CD8-positive, alpha-beta T cell (primary cell): ENCODE measurements at regions of chrX and their contacts with region 1.

Region 1: DNA sequence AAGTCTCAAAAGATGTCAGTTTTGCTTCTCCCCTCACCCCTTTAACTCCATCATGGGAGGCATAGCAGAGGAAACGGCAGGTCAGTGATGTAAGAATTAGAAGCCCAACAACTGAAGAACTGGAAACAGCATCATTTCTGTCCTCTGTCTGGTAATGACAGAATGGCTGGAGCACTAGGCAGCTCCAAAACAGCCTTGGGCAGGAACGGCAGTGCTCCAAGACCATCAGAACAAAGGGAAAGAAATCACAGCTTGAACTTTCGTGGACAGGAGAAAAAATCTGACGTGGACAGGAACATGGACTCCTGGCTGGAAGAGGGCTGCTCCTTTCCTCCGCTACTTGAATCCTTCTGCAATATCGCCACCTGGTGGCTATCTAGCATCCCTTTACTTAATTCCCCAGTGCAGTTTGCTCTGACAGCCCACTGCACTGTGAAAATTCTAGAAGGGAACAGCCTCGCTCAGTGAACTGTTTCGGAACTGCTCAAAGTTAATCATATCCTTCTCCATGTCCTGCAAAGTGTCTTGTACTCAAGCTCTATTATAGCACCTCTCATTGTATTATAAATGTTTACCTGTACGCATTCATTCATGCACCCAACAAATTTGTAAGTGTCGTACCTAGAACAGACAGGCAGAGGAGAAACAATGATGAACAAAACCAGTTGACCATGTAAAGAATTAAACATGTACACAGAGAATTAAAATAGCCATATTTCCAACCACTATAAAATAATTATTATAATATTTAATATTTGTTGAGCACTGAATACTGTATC is 20.4 kb downstream of the SLC25A53 start:
- DNase-seq: peak in 8 of 9 experiments; percentile 32 to 82 (median 62)
- ATAC-seq: peak; percentile 70
- H3K4me3 ChIP-seq: no peak overlapping the region
- H3K4me3 Mint-ChIP-seq: peak overlapping the region; percentile 22
- H3K27ac ChIP-seq: no peak overlapping the region
- H3K27ac Mint-ChIP-seq: no peak overlapping the region
- H3K4me1 ChIP-seq: peaks cover 13% of the 10 kb centered on the region
- H3K4me1 Mint-ChIP-seq: peaks cover 28% of the 10 kb centered on the region
- H3K27me3 ChIP-seq: no peaks in the 10 kb centered on the region
- H3K27me3 Mint-ChIP-seq: no peaks in the 10 kb centered on the region
- CTCF ChIP-seq: peak; percentile 61

Region 2: DNA sequence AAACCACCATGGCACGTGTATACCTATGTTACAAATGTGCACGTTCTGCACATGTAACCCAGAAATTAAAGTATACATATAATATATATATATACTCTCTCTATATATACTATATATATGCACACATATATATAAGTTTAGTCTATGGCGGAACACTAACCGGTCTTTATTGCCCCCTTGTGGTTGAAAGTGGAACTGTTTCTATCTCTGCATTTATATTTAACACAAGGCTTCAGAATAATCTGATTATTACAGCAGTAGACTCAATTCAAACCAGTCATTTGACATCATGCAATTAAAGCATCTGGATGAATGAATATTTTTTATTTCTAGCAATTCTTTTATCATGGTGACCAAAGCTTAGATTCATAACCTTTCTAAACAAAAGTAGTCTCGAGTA is 318.9 kb before region 1 on chrX:
- CTCF ChIA-PET with region 1: no interaction called
- POLR2A ChIA-PET with region 1: no interaction called
- intact Hi-C with region 1: no loop called
- DNase-seq: peak in 3 of 9 experiments; percentile 40 to 66 (median 60)
- ATAC-seq: peak; percentile 64
- H3K4me3 ChIP-seq: no peak overlapping the region
- H3K4me3 Mint-ChIP-seq: no peak overlapping the region
- H3K27ac ChIP-seq: no peak overlapping the region
- H3K27ac Mint-ChIP-seq: no peak overlapping the region
- H3K4me1 ChIP-seq: no peaks in the 10 kb centered on the region
- H3K4me1 Mint-ChIP-seq: no peaks in the 10 kb centered on the region
- H3K27me3 ChIP-seq: no peaks in the 10 kb centered on the region
- H3K27me3 Mint-ChIP-seq: peaks cover 8% of the 10 kb centered on the region
- CTCF ChIP-seq: peak; percentile 58

Region 3: DNA sequence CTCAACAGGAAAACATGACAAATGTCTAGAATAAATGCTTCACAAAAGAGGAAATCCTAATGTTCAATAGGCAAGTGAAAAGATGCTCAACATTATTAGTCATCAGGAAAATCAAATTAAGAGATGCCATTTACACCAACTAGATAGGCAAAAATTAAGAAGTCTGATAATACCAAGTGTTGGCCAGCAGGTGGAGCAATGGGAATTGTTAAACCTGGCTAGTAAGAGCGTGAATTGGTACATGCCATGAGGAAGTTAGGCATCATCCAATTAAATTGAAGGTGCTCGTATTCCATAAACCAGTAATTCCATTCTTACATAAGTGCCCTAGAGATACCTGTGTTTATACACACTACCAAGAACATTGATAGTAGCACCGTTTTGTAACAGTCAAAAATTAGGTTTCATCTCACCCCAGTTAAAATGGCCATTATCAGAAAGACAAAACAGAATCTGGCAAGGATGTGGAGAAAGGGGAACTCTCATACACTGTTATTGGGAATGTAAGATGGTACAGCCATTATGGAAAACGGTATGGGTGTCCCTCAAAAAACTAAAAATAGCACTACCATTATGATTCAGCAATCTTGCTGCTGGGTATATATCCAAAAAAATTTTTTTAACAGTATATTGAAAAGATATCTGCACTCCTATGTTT is 38.1 kb before region 1 on chrX:
- CTCF ChIA-PET with region 1: interaction called, 38 read pairs
- POLR2A ChIA-PET with region 1: no interaction called
- intact Hi-C with region 1: loop called (anchors 1 kb)
- DNase-seq: peak in 8 of 9 experiments; percentile 21 to 85 (median 58)
- ATAC-seq: peak; percentile 77
- H3K4me3 ChIP-seq: no peak overlapping the region
- H3K4me3 Mint-ChIP-seq: no peak overlapping the region
- H3K27ac ChIP-seq: no peak overlapping the region
- H3K27ac Mint-ChIP-seq: no peak overlapping the region
- H3K4me1 ChIP-seq: no peaks in the 10 kb centered on the region
- H3K4me1 Mint-ChIP-seq: peaks cover 4% of the 10 kb centered on the region
- H3K27me3 ChIP-seq: no peaks in the 10 kb centered on the region
- H3K27me3 Mint-ChIP-seq: no peaks in the 10 kb centered on the region
- CTCF ChIP-seq: peak; percentile 57

Region 4: DNA sequence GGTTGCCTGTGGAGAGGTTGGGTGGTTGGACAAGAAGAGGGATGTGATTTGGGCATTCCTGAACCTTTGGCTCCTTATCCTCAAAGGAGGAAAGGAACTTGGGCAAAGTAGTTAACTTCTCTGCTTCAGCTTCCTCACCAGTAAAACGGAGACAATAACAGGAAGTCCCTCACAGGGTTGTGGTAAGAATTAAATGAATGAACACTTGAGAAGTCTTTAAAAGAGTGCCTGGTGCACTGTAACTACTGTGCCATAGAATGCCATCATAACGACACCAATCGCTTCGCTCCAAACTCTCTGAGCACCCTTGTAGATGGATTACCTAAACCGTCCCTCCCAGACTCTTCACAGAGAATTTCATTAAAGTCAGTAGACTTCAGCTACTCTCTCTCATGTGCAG is 13.6 kb before region 1 on chrX:
- CTCF ChIA-PET with region 1: interaction called, 15 read pairs
- POLR2A ChIA-PET with region 1: no interaction called
- intact Hi-C with region 1: no loop called
- DNase-seq: peak in 3 of 9 experiments; percentile 16 to 51 (median 22)
- ATAC-seq: peak; percentile 96
- H3K4me3 ChIP-seq: no peak overlapping the region
- H3K4me3 Mint-ChIP-seq: peak overlapping the region; percentile 56
- H3K27ac ChIP-seq: peak overlapping the region; percentile 4 to 44
- H3K27ac Mint-ChIP-seq: peak overlapping the region; percentile 94
- H3K4me1 ChIP-seq: peaks cover 10% of the 10 kb centered on the region
- H3K4me1 Mint-ChIP-seq: peaks cover 38% of the 10 kb centered on the region
- H3K27me3 ChIP-seq: no peaks in the 10 kb centered on the region
- H3K27me3 Mint-ChIP-seq: no peaks in the 10 kb centered on the region
- CTCF ChIP-seq: no peak

Region 5: GRCh38 chrX:105347379-105347778 is 1210.9 kb after region 1 on chrX:
- CTCF ChIA-PET with region 1: no interaction called
- POLR2A ChIA-PET with region 1: no interaction called
- intact Hi-C with region 1: no loop called
- DNase-seq: no peak
- ATAC-seq: no peak
- H3K4me3 ChIP-seq: no peak overlapping the region
- H3K4me3 Mint-ChIP-seq: no peak overlapping the region
- H3K27ac ChIP-seq: no peak overlapping the region
- H3K27ac Mint-ChIP-seq: no peak overlapping the region
- H3K4me1 ChIP-seq: no peaks in the 10 kb centered on the region
- H3K4me1 Mint-ChIP-seq: no peaks in the 10 kb centered on the region
- H3K27me3 ChIP-seq: no peaks in the 10 kb centered on the region
- H3K27me3 Mint-ChIP-seq: no peaks in the 10 kb centered on the region
- CTCF ChIP-seq: no peak